Stomach (tissue), 19 donors: ENCODE measurements at regions of chr11 and their contacts with region 1.

Region 1: GRCh38 chr11:77127232-77127911 is 674 bp upstream of the MYO7A start:
- DNase-seq: peak; percentile 60 to 87
- H3K4me3 ChIP-seq: peak overlapping the region; percentile 37 to 45 (median 43)
- H3K27ac ChIP-seq: peak overlapping the region in 2 of 5 donors; percentile 3 to 5
- H3K4me1 ChIP-seq: peaks cover 21 to 46% (median 34%) of the 10 kb centered on the region in 4 donors
- H3K27me3 ChIP-seq: peaks cover 0 to 13% (median 0%) of the 10 kb centered on the region in 3 donors
- CTCF ChIP-seq: peak in 6 of 7 experiments; percentile 93 to 99 (median 96)
- EP300 ChIP-seq: no peak
- POLR2A ChIP-seq: no peak

Region 2: GRCh38 chr11:77187776-77188632 is 60.6 kb after region 1 on chr11:
- intact Hi-C with region 1: loop called (anchors 5 kb)
- DNase-seq: peak; percentile 87 to 94
- H3K4me3 ChIP-seq: no peak overlapping the region
- H3K27ac ChIP-seq: no peak overlapping the region
- H3K4me1 ChIP-seq: peaks cover 0 to 9% (median 2%) of the 10 kb centered on the region in 4 donors
- H3K27me3 ChIP-seq: no peaks in the 10 kb centered on the region
- CTCF ChIP-seq: peak in 5 of 7 experiments; percentile 70 to 85 (median 81)
- EP300 ChIP-seq: no peak
- POLR2A ChIP-seq: no peak

Region 3: DNA sequence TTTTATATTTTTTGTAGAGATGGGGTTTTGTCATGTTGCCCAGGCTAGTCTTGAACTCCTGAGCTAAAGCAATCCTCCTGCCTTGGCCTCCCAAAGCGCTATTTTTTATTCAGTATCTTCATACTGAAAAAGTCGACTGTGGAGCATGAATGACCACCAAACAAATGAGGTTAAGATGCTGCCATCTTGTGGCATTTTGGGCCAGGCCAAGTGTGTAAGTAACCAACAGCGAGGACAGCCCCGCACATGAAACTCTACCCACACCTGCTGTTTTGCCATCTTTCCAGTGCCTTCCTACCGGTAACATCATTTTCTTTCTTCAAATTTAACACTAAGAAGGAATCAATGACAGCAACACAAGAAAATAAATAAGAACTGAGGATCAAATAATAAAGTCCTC is 430.2 kb after region 1 on chr11:
- intact Hi-C with region 1: loop called (anchors 10 kb)
- DNase-seq: peak in 1 of 2 donors; percentile 43
- H3K4me3 ChIP-seq: no peak overlapping the region
- H3K27ac ChIP-seq: no peak overlapping the region
- H3K4me1 ChIP-seq: no peaks in the 10 kb centered on the region
- H3K27me3 ChIP-seq: no peaks in the 10 kb centered on the region
- CTCF ChIP-seq: no peak
- EP300 ChIP-seq: no peak
- POLR2A ChIP-seq: no peak

Region 4: GRCh38 chr11:78045851-78046485 is 918.6 kb after region 1 on chr11:
- intact Hi-C with region 1: no loop called
- DNase-seq: peak; percentile 89 to 92
- H3K4me3 ChIP-seq: peak overlapping the region; percentile 43 to 51 (median 47)
- H3K27ac ChIP-seq: peak overlapping the region; percentile 71 to 83 (median 79)
- H3K4me1 ChIP-seq: peaks cover 12 to 23% (median 14%) of the 10 kb centered on the region in 4 donors
- H3K27me3 ChIP-seq: no peaks in the 10 kb centered on the region
- CTCF ChIP-seq: peak in 6 of 7 experiments; percentile 41 to 99 (median 94)
- EP300 ChIP-seq: no peak
- POLR2A ChIP-seq: no peak